ENCODE measurements at regions of chr1 and their contacts with region 1.

Region 1: DNA sequence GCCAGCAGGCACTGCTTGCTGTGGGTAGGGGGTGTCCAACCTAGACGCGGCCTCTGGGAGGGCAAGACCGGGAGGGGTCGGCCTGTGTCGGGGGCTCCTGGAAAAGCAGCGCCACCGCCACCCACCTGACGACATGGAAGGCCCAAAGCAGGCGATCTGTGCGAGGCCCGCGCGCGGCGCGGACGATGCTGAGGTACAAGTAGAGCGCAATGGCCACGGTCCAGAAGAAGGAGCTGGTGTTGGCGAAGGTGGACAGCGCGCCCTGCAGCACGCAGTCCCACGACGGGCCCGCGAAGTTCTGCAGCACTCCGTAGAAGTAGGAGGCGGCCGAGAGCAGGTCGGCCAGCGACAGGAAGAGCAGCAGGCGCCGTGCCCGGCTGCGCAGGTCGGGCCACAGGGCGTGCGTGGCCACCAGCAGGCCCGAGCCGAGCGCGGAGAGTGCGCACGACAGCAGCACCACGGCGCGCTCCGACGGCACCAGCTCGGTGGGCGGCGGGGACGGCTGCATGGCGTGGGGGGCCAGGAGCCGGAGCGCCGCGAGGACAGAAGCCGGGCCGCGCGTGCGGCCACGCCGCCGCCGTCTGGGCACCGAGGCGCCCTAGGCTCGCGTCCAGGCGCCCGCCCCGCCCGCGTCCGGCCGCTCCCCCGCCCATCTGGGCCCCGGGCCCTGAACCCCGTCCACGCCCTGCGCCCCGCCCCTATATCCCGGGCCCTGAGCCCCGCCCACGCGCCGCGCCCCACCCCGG is at the start of gene GPR157:
- DNase-seq: peak; percentile 90
- ATAC-seq: peak; percentile 88
- H3K4me3 ChIP-seq: peak within 1 kb of the TSS; percentile 44 to 79 (median 61)
- H3K4me3 Mint-ChIP-seq: peak within 1 kb of the TSS; percentile 94
- H3K27ac ChIP-seq: peak within 1 kb of the TSS; percentile 38 to 48
- H3K27ac Mint-ChIP-seq: peak within 1 kb of the TSS; percentile 78
- H3K4me1 ChIP-seq: peaks cover 17 to 29% of the 10 kb centered on the region in 2 donors
- H3K4me1 Mint-ChIP-seq: peaks cover 44% of the 10 kb centered on the region
- H3K27me3 ChIP-seq: no peaks in the 10 kb centered on the region
- H3K27me3 Mint-ChIP-seq: no peaks in the 10 kb centered on the region
- CTCF ChIP-seq: no peak
- total RNA-seq, gene GPR157: 19.9 and 21.2 TPM in 2 replicates

Region 2: GRCh38 chr1:9069326-9070100 is 59.2 kb before region 1 on chr1 and contains the start of gene SLC2A5:
- CTCF ChIA-PET with region 1: interaction called, 3 read pairs
- POLR2A ChIA-PET with region 1: no interaction called
- intact Hi-C with region 1: loop called (anchors 2 kb)
- DNase-seq: peak; percentile 89
- ATAC-seq: peak; percentile 98
- H3K4me3 ChIP-seq: peak within 1 kb of the TSS; percentile 22 to 70 (median 65)
- H3K4me3 Mint-ChIP-seq: peak within 1 kb of the TSS; percentile 95
- H3K27ac ChIP-seq: peak within 1 kb of the TSS; percentile 71 to 78
- H3K27ac Mint-ChIP-seq: peak within 1 kb of the TSS; percentile 84
- H3K4me1 ChIP-seq: peaks cover 49 to 58% of the 10 kb centered on the region in 2 donors
- H3K4me1 Mint-ChIP-seq: peaks cover 69% of the 10 kb centered on the region
- H3K27me3 ChIP-seq: no peaks in the 10 kb centered on the region
- H3K27me3 Mint-ChIP-seq: no peaks in the 10 kb centered on the region
- CTCF ChIP-seq: no peak
- total RNA-seq, gene SLC2A5: 28.8 and 29.5 TPM in 2 replicates

Region 3: DNA sequence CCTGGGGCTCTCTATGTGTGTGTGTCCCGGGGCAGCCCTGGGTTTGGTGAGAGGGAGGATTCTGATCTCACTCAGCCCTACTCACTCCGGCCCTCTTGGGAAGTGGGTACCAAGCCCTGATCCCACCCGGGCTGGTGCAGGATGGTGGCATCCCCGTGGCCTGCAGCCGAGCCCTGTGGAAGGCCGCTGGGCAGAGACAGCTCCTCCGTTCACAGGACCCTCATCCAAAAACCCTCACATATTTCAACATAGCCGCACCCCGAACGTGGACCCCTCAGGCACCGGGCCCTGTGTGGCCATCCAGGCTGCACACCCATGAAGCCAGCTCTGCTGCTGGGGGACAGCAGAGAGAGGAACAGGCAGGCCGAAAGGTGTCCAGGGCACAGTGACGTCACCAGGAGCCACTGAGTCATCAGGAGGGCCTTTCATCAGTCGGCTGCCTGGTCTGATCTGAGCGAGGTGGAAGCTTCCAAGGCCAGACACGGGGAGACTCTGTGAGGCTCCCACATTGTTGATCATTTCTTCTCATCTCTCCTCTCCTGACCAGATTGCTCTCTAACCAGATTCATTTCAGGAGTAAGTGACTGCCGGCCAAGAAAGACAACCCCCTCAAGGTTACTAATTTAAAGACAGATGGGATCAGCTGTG is 16.5 kb after region 1 on chr1:
- CTCF ChIA-PET with region 1: interaction called, 21 read pairs
- POLR2A ChIA-PET with region 1: interaction called, 4 read pairs
- intact Hi-C with region 1: loop called (anchors 1 kb)
- DNase-seq: no peak
- ATAC-seq: no peak
- H3K4me3 ChIP-seq: no peak overlapping the region
- H3K4me3 Mint-ChIP-seq: no peak overlapping the region
- H3K27ac ChIP-seq: no peak overlapping the region
- H3K27ac Mint-ChIP-seq: no peak overlapping the region
- H3K4me1 ChIP-seq: no peaks in the 10 kb centered on the region
- H3K4me1 Mint-ChIP-seq: peaks cover 3% of the 10 kb centered on the region
- H3K27me3 ChIP-seq: no peaks in the 10 kb centered on the region
- H3K27me3 Mint-ChIP-seq: no peaks in the 10 kb centered on the region
- CTCF ChIP-seq: no peak

Region 4: GRCh38 chr1:9181176-9181906 is 52.6 kb after region 1 on chr1:
- CTCF ChIA-PET with region 1: no interaction called
- POLR2A ChIA-PET with region 1: interaction called, 4 read pairs
- intact Hi-C with region 1: loop called (anchors 5 kb)
- DNase-seq: peak; percentile 75
- ATAC-seq: peak; percentile 62
- H3K4me3 ChIP-seq: peak overlapping the region in 4 of 5 experiments; percentile 15 to 50 (median 44)
- H3K4me3 Mint-ChIP-seq: peak overlapping the region; percentile 82
- H3K27ac ChIP-seq: no peak overlapping the region
- H3K27ac Mint-ChIP-seq: no peak overlapping the region
- H3K4me1 ChIP-seq: peaks cover 17 to 25% of the 10 kb centered on the region in 2 donors
- H3K4me1 Mint-ChIP-seq: peaks cover 18% of the 10 kb centered on the region
- H3K27me3 ChIP-seq: peaks cover 0 to 42% (median 12%) of the 10 kb centered on the region in 4 experiments
- H3K27me3 Mint-ChIP-seq: peaks cover 28% of the 10 kb centered on the region
- CTCF ChIP-seq: peak; percentile 95

Region 5: DNA sequence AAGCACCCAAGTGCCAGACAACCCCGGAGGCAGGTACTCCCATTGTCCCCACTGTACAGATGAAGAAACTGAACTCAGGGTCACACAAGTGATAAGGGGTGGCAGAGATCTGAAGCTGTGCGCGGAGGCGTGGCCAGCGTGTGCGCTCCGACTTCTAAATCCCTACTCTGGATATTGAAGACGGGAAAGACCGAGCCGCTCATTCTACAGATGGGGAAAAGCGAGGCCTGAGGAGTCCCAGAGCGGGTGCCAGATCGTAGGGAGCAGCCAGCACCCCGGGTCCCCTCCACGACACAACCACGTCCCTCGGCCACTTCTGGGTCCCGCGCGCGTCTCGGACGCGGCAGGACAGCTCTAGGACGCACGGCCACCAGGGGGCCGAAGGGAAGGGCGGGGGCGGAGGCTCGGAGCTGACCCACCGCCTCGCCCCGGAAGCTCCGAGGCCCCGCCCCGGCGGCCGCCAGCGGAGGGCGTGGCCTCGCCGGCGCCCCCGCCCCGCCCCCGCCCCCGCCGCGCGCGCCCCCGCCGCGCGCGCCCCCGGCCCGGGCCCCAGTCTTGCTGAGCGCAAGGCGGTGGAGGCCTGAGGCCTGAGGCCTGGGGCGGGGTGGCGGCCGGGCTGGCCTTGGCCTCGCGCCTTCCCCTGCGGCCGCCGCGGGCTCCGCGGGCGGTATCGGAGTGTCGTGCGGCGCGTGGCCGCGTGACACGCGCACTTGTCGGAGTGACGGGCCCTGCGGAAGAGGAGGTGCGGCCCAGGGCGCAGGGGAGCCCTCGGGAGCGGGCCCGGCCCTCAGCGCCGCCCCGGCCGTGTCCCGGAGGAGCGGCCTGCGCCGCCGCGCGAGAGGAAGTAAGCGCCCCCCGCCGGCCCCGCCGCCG is 105.8 kb after region 1 on chr1 and contains the start of gene H6PD:
- CTCF ChIA-PET with region 1: interaction called, 11 read pairs
- POLR2A ChIA-PET with region 1: no interaction called
- intact Hi-C with region 1: loop called (anchors 1 kb)
- DNase-seq: peak; percentile 92
- ATAC-seq: peak; percentile 83
- H3K4me3 ChIP-seq: peak within 1 kb of the TSS; percentile 55 to 80 (median 73)
- H3K4me3 Mint-ChIP-seq: peak within 1 kb of the TSS; percentile 96
- H3K27ac ChIP-seq: peak within 1 kb of the TSS; percentile 79 to 88
- H3K27ac Mint-ChIP-seq: peak within 1 kb of the TSS; percentile 96
- H3K4me1 ChIP-seq: peaks cover 19 to 36% of the 10 kb centered on the region in 2 donors
- H3K4me1 Mint-ChIP-seq: peaks cover 41% of the 10 kb centered on the region
- H3K27me3 ChIP-seq: no peaks in the 10 kb centered on the region
- H3K27me3 Mint-ChIP-seq: no peaks in the 10 kb centered on the region
- CTCF ChIP-seq: peak; percentile 63
- total RNA-seq, gene H6PD: 30.2 and 31.4 TPM in 2 replicates